MCF 10A (cell line): ENCODE measurements at regions of chr6 and their contacts with region 1.

Region 1: DNA sequence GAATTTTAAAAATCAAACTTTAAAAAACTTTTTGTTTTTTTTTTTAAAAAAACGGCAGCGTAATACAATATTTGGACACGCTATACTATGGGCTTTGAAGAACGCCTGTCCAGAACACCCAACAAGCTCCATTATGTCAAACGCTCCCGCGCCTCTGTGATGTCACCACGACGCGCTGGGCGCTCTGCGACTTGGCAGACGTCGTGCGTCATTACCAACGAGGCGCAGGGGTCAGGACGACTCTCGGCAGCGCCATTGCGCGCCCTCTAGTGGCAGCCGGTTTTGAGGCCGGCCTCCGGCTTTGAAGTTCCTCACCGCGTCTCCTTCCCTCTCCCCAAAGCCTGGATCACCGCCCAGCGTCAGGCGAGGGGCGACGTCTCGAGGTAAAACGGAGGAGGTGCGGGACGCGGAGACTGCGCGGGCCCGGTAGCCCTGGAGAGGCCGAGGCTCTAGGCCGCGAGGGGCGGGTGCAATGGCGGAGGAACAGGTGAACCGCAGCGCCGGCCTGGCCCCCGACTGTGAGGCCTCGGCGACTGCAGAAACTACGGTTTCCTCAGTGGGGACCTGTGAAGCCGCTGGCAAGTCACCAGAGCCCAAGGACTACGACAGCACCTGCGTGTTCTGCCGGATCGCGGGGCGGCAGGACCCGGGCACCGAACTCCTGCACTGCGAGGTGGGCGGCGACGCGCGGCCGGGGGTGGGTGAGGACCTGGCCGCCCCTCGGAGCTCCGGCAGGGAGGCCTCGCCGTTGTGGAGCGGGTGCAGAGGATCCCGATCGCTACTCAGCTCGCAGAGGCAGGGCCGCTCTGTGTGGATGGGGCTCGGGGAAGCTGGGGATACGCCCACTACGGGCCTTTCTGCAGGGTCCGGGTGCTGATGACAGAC is at the start of gene HINT3:
- DNase-seq: peak; percentile 96
- H3K4me3 Mint-ChIP-seq: no peak within 1 kb of the TSS
- H3K27ac Mint-ChIP-seq: no peak within 1 kb of the TSS
- H3K4me1 Mint-ChIP-seq: no peaks in the 10 kb centered on the region
- H3K27me3 Mint-ChIP-seq: no peaks in the 10 kb centered on the region
- CTCF ChIP-seq: peak; percentile 97
- total RNA-seq, gene HINT3: 17.9 and 20.2 TPM in 2 replicates

Region 2: DNA sequence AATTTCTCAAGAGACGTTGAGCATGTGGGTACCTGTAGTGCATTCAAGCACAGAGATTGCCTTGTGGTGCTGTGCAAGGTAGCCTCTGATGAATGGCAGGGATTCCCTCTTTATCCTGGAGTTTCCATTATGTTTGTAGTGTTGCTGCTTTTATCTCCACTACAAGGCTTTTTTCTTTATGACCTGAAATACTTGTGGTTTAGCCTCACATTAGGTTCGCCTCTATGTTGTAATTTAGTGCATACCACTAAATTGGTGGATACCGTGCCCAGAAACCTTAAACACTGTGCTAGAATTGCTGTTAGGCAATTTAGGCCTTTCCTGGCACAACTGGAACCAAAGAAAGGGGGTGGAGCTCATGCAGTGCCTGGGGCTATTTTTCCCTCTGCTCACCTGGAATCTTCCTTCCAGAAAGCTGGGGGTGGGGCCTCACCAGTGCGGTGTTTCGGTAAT is 89.2 kb before region 1 on chr6:
- CTCF ChIA-PET with region 1: interaction called, 82 read pairs
- POLR2A ChIA-PET with region 1: interaction called, 61 read pairs
- intact Hi-C with region 1: no loop called
- DNase-seq: peak; percentile 99
- H3K4me3 Mint-ChIP-seq: peak overlapping the region; percentile 39
- H3K27ac Mint-ChIP-seq: peak overlapping the region; percentile 87
- H3K4me1 Mint-ChIP-seq: peaks cover 57% of the 10 kb centered on the region
- H3K27me3 Mint-ChIP-seq: no peaks in the 10 kb centered on the region
- CTCF ChIP-seq: no peak

Region 3: DNA sequence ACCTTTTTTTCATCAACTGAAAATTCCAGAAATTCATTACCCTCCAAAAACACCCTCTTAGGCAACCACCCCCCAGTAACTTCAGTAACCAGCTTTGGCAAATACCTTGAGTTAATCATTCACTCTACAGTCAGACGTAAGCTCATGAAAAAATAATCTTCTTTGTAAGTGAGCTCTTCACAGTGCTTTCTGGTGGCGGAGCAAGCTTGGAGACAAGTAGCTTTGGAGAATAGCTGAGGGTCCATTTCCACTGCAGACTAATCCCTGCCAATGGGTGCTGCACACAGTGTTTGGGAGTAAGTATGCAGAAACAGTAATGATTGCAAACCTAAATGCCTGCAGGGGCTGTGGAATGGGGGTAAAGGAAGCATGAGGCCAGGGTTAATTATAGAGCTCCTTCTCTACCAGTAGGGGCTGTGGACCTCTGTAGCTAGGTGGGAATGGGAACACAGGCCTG is 57.0 kb before region 1 on chr6:
- CTCF ChIA-PET with region 1: interaction called, 38 read pairs
- POLR2A ChIA-PET with region 1: interaction called, 30 read pairs
- intact Hi-C with region 1: loop called (anchors 2 kb)
- DNase-seq: no peak
- H3K4me3 Mint-ChIP-seq: no peak overlapping the region
- H3K27ac Mint-ChIP-seq: no peak overlapping the region
- H3K4me1 Mint-ChIP-seq: peaks cover 10% of the 10 kb centered on the region
- H3K27me3 Mint-ChIP-seq: no peaks in the 10 kb centered on the region
- CTCF ChIP-seq: no peak

Region 4: GRCh38 chr6:125918681-125919566 is 37.8 kb before region 1 on chr6:
- CTCF ChIA-PET with region 1: interaction called, 65 read pairs
- POLR2A ChIA-PET with region 1: interaction called, 103 read pairs
- intact Hi-C with region 1: loop called (anchors 2 kb)
- DNase-seq: peak; percentile 97
- H3K4me3 Mint-ChIP-seq: peak overlapping the region; percentile 90
- H3K27ac Mint-ChIP-seq: peak overlapping the region; percentile 99
- H3K4me1 Mint-ChIP-seq: peaks cover 47% of the 10 kb centered on the region
- H3K27me3 Mint-ChIP-seq: no peaks in the 10 kb centered on the region
- CTCF ChIP-seq: no peak

Region 5: DNA sequence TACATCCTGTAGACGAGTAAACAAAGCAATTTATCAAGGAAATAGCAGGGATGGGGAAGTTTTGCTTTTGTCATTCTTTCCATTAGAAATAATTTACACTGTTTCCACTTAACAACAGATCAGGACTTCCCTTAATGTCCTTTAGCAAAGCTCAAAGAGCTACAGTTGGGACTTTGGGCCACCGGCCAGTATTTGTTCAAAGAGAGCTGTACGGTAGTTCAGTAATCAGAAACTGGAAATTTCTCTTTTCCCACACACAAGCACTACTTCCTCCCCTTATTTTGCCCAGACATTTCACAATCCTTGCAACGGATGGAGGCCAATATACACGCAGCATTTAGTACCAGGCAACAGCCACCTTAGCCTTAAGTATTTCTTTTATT is 12.3 kb before region 1 on chr6:
- CTCF ChIA-PET with region 1: interaction called, 23 read pairs
- POLR2A ChIA-PET with region 1: interaction called, 102 read pairs
- intact Hi-C with region 1: no loop called
- DNase-seq: peak; percentile 93
- H3K4me3 Mint-ChIP-seq: no peak overlapping the region
- H3K27ac Mint-ChIP-seq: peak overlapping the region; percentile 92
- H3K4me1 Mint-ChIP-seq: peaks cover 72% of the 10 kb centered on the region
- H3K27me3 Mint-ChIP-seq: no peaks in the 10 kb centered on the region
- CTCF ChIP-seq: no peak

Region 6: GRCh38 chr6:125974214-125974866 is 17.6 kb after region 1 on chr6:
- CTCF ChIA-PET with region 1: interaction called, 34 read pairs
- POLR2A ChIA-PET with region 1: interaction called, 6 read pairs
- intact Hi-C with region 1: no loop called
- DNase-seq: peak; percentile 66
- H3K4me3 Mint-ChIP-seq: no peak overlapping the region
- H3K27ac Mint-ChIP-seq: no peak overlapping the region
- H3K4me1 Mint-ChIP-seq: peaks cover 5% of the 10 kb centered on the region
- H3K27me3 Mint-ChIP-seq: no peaks in the 10 kb centered on the region
- CTCF ChIP-seq: peak; percentile 44